Naive thymus-derived CD4-positive, alpha-beta T cell (primary cell): ENCODE measurements at regions of chr9 and their contacts with region 1.

Region 1: DNA sequence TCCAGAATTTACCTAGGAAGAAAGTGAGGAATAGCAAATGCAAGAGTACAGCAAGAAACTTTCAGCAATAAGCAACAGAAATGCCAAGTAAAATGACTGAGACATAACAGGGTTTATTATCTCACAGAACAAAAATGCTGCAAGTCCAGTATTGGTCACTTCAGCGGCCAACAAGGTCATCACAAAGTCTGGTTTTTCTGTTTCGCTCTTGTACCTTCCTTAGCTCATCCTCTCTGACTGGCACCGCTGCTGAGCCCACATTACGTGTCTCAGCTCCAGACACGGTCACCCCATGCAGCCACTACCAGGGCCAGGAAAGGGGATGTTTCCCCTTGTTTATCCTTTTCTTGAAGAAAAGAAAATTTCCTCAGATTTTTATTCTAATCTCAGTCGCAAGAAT is 82.6 kb downstream of the RFK start:
- DNase-seq: no peak
- ATAC-seq: no peak
- H3K4me3 ChIP-seq: no peak overlapping the region
- H3K4me3 Mint-ChIP-seq: no peak overlapping the region
- H3K27ac ChIP-seq: no peak overlapping the region
- H3K27ac Mint-ChIP-seq: no peak overlapping the region
- H3K4me1 ChIP-seq: no peaks in the 10 kb centered on the region
- H3K4me1 Mint-ChIP-seq: no peaks in the 10 kb centered on the region
- H3K27me3 ChIP-seq: no peaks in the 10 kb centered on the region
- H3K27me3 Mint-ChIP-seq: peaks cover 4 to 26% (median 11%) of the 10 kb centered on the region in 5 donors

Region 2: GRCh38 chr9:76290555-76290954 is 21.0 kb before region 1 on chr9:
- CTCF ChIA-PET with region 1: no interaction called
- POLR2A ChIA-PET with region 1: no interaction called
- intact Hi-C with region 1: loop called in 1 of 2 experiments (anchors 1 kb)
- DNase-seq: no peak
- ATAC-seq: no peak
- H3K4me3 ChIP-seq: no peak overlapping the region
- H3K4me3 Mint-ChIP-seq: no peak overlapping the region
- H3K27ac ChIP-seq: no peak overlapping the region
- H3K27ac Mint-ChIP-seq: peak overlapping the region in 1 of 9 donors; percentile 26
- H3K4me1 ChIP-seq: no peaks in the 10 kb centered on the region
- H3K4me1 Mint-ChIP-seq: peaks cover 0 to 3% (median 0%) of the 10 kb centered on the region in 7 donors
- H3K27me3 ChIP-seq: no peaks in the 10 kb centered on the region
- H3K27me3 Mint-ChIP-seq: no peaks in the 10 kb centered on the region